Activated CD4-positive, alpha-beta memory T cell treated with anti-CD3 and anti-CD28 coated beads, Interleukin-2, amount 10 ng/mL, durations not matched to agents 7 days and 5 days (primary cell): ENCODE measurements at regions of chr1 and their contacts with region 1.

Region 1: DNA sequence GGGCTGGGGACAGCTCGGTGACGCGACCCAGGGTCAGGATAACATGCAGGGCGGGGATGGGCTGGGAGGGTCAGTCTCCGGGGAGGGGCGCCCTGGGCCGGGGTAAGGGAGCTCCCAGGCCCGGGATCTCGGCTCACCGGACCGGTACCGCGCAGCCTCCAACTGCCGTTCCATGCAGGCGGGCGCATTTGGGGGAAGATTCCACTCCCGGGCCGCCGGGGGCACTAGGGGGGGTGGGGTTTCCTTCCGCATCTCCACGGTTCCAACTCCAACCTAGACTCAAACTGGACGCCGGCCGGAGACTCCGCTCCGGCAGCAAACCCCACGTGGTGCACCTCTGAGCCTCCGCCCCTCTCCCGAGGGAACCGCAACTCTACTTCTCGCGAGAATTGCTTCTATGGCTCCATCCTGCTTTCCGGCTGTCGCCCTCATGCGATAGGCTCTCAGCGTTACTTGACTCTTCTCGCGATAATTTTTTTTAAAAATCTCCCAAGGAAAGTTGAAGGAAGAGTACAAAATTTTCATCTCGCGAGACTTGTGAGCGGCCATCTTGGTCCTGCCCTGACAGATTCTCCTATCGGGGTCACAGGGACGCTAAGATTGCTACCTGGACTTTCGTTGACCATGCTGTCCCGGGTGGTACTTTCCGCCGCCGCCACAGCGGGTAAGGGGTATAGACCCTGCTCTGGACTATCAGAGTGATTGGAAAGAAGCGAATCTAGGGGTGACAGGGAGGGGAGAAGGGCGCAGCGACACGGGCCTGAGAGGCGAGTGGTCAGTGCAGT is at the starts of genes ATP5PB and WDR77:
- DNase-seq: peak; percentile 94
- H3K4me3 Mint-ChIP-seq: peak within 1 kb of the TSS; percentile 100
- H3K27ac Mint-ChIP-seq: peak within 1 kb of the TSS; percentile 95
- H3K4me1 Mint-ChIP-seq: peaks cover 75% of the 10 kb centered on the region
- H3K27me3 Mint-ChIP-seq: no peaks in the 10 kb centered on the region
- total RNA-seq, gene ATP5PB: 272 to 286 TPM
- total RNA-seq, gene WDR77: 26.3 to 28.4 TPM

Region 2: GRCh38 chr1:111755331-111756123 is 306.4 kb after region 1 on chr1 and contains the start of gene DDX20:
- CTCF ChIA-PET with region 1: interaction called, 8 read pairs
- POLR2A ChIA-PET with region 1: interaction called, 22 read pairs
- DNase-seq: peak; percentile 94
- H3K4me3 Mint-ChIP-seq: peak within 1 kb of the TSS; percentile 93
- H3K27ac Mint-ChIP-seq: peak within 1 kb of the TSS; percentile 96
- H3K4me1 Mint-ChIP-seq: peaks cover 48% of the 10 kb centered on the region
- H3K27me3 Mint-ChIP-seq: peaks cover 4% of the 10 kb centered on the region
- total RNA-seq, gene DDX20: 11.2 to 11.8 TPM